ENCODE measurements at regions of chr14 and their contacts with region 1.

Region 1: GRCh38 chr14:54642801-54643697 is 76.1 kb downstream of the SAMD4A start:
- DNase-seq: peak; percentile 46
- ATAC-seq: no peak
- H3K4me3 ChIP-seq: no peak overlapping the region
- H3K27ac ChIP-seq: no peak overlapping the region
- H3K4me1 ChIP-seq: peaks cover 20% of the 10 kb centered on the region
- H3K27me3 ChIP-seq: no peaks in the 10 kb centered on the region
- CTCF ChIP-seq: peak; percentile 63

Region 2: DNA sequence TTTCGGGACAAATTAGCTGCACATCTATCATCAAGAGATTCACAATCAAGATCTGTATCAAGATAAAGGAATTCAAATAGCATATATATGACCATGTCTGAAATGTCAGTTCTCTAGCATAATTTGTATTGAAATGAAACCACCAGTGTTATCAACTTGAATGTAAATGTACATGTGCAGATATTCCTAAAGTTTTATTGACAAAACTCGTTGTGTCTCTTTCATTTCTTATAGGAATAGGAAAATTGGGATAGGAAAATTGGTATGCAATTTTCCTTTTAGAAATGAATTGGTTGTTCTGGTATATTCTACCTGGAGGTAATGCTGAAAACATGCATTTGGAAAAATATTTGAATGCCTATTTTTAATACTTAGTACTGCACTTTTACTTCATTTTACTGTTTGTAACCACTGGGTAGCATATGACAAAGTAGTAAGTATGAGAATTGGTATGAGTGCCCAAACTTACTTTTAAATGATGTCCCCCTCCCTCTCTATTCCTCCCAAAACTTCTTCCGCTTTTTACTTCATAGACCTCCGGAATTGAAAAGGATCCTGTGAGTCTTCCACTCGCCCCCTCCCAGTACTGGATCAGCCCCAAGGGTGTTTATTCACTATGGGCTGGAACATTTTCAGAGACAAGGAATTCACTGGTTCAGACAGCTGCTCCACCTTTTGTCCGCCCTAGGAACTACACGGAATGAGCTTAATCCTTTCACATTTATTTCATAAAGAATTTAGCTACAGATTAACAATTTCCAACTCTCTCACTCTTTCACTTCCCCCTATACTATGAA is 222.8 kb before region 1 on chr14:
- CTCF ChIA-PET with region 1: no interaction called
- POLR2A ChIA-PET with region 1: no interaction called
- intact Hi-C with region 1: no loop called
- DNase-seq: peak; percentile 89
- ATAC-seq: peak; percentile 82
- H3K4me3 ChIP-seq: no peak overlapping the region
- H3K27ac ChIP-seq: no peak overlapping the region
- H3K4me1 ChIP-seq: no peaks in the 10 kb centered on the region
- H3K27me3 ChIP-seq: no peaks in the 10 kb centered on the region
- CTCF ChIP-seq: peak; percentile 96

Region 3: DNA sequence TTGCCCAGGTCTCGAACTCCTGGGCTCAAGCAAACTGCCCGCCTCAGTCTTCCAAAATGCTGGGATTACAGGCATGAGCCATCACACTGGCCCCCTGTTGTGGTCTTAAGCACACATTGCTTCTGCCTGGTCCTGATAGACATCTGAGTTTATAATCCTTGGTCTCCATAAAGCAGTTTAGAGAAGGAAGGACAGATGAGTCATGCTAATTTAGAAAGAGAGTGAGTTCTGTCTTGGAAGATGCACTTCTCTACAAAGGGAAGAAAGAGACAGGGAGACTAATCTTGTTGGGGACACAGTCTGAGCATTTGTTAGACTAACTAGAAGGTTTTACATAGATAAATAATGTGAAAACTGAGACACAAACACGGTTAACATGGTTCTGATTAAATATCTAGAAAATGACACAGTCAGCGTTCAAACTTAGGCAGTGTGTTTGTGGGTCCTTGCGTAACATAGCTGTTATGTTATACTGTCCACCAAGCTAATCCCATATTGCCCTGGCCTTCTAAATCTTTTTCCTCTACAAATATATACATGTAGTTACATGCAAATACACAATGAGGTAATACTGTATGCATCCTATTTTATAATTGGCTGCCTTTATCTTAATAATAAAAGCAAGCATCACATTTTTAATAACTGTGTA is 45.1 kb before region 1 on chr14:
- CTCF ChIA-PET with region 1: no interaction called
- POLR2A ChIA-PET with region 1: no interaction called
- intact Hi-C with region 1: loop called (anchors 2 kb)
- DNase-seq: peak; percentile 85
- ATAC-seq: peak; percentile 66
- H3K4me3 ChIP-seq: no peak overlapping the region
- H3K27ac ChIP-seq: no peak overlapping the region
- H3K4me1 ChIP-seq: peaks cover 56% of the 10 kb centered on the region
- H3K27me3 ChIP-seq: no peaks in the 10 kb centered on the region
- CTCF ChIP-seq: no peak